Posterior vena cava (tissue), 2 donors: ENCODE measurements at regions of chr7 and their contacts with region 1.

Region 1: DNA sequence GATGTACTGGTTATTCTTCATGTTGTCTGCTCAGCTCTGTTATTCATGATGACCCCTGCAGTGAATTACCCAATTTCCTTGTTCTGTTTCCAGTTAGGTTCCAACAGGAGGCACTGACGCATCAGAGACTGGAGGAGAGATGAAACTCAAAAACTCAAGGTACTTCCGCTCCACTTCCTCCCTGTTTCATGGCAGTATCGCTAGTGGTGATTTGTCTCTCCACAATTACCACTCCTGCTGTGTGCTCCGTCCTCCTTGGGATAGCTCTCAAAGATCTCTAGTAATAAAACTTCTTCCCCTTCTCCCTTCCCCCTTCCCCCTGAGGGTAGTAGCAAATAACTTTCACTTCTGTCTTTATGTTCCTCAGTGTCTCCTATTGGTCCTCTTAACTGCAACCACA is 107.4 kb upstream of the ABCB5 start:
- DNase-seq: no peak

Region 2: GRCh38 chr7:20064974-20065862 is 442.9 kb before region 1 on chr7:
- intact Hi-C with region 1: no loop called
- DNase-seq: no peak

Region 3: DNA sequence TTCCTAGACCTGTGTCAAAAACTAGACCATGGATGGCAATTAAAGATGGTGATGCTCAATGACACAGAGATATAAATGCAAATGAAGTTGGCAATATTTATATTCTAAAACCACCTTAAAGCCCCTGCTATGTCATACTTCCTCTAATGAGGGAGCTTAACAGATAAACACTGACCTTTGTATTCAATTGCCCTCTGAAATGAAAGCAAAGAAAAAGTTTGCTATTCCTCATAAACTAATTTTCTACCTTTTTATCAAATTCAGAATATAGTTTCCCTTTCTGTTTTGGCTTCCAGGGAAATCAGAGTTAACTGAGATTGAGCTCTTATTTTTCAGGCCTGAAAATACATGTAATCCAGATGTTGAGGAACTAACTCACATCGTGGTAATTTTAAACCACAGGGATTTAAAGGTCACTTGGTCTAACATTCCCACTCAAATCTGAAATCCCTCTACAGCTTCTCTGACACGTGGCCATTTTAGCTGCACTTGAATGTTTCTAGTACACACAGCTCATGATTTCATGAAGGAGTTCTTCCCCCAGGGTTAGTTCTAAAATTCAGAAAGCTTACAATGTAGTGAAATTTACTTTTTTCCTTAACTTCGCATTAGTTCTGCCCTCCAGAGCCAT is 69.4 kb after region 1 on chr7:
- intact Hi-C with region 1: no loop called
- DNase-seq: no peak

Region 4: GRCh38 chr7:21400598-21400997 is 892.5 kb after region 1 on chr7:
- intact Hi-C with region 1: loop called in 1 of 2 experiments (anchors 5 kb)
- DNase-seq: no peak

Region 5: GRCh38 chr7:21690705-21691104 is 1182.6 kb after region 1 on chr7:
- intact Hi-C with region 1: loop called in 1 of 2 experiments (anchors 10 kb)
- DNase-seq: no peak